IMR-90 (cell line): ENCODE measurements at regions of chr11 and their contacts with region 1.

Region 1: GRCh38 chr11:66081505-66081904 is 11.4 kb downstream of the PACS1 start:
- DNase-seq: no peak
- ATAC-seq: no peak
- H3K4me3 ChIP-seq: no peak overlapping the region
- H3K27ac ChIP-seq: no peak overlapping the region
- H3K4me1 ChIP-seq: peaks cover 26% of the 10 kb centered on the region
- H3K27me3 ChIP-seq: no peaks in the 10 kb centered on the region
- CTCF ChIP-seq: no peak
- POLR2A ChIP-seq: no peak
- RAD21 ChIP-seq: no peak

Region 2: DNA sequence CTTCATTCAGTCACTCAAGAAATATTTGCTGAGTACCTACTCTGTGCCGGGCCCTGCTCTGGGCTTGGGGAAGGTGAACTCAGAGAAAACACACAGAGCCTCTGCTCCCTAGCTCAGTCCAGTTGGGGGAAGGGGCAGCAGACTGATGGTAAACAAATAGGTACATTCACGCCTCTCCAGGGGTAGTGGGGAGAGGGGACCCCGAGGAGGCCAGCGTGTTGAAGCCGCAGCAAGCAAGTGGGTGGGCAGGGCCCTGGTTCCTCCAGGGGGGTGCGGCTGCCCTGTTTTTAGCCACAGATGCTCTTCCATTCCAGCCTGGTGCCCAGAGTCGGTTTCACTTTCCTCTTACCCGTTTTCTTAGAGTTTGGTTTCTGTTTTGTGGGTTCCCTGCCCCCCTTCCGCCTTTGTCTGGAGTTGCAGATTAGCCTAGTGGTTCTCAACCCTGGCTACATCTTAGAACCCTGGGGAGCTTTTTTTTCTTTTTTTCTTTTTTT is 153.6 kb before region 1 on chr11:
- CTCF ChIA-PET with region 1: no interaction called
- POLR2A ChIA-PET with region 1: no interaction called
- dilution Hi-C with region 1: no loop called
- in situ Hi-C with region 1: no loop called
- intact Hi-C with region 1: no loop called
- DNase-seq: no peak
- ATAC-seq: peak; percentile 33
- H3K4me3 ChIP-seq: no peak overlapping the region
- H3K27ac ChIP-seq: no peak overlapping the region
- H3K4me1 ChIP-seq: no peaks in the 10 kb centered on the region; the same call in 1 of the 2 replicates
- H3K27me3 ChIP-seq: no peaks in the 10 kb centered on the region
- CTCF ChIP-seq: no peak
- POLR2A ChIP-seq: no peak
- RAD21 ChIP-seq: no peak

Region 3: DNA sequence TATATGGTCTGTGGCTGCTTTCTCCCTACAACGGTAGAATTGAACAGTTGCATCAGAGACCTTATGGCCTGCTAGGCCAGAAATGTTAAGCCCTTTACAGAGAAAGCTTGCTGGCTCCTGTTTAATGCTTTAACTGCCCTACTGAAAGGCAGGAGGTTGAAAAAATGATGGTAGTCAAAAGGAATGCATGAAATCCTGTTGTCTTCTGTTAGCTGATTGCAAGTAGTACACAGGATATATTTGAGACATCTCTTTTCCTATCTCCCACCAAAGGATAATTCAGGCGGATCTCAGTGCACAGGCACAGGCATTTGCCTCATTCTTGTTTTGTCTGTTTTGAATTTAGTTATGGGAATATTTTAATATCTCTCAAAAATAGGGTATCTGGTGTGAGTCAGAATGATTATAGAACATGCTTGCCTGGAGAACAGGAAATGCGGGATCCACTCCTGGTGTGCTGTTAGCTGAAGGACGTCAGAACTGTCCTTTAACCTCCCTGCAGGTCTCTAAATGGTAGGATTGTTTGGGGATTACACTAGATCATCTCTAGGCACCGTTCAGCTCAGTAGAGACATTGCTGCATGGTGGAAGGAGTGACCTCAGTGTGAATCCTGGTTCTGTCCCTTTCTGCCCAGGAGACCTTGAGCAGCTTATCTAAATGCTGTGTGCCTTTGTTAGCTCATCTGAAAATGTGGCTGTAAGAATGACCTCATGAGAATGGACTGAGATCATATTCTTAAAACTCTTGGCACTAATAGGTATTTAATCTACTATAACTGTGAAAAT is 38.0 kb after region 1 on chr11:
- CTCF ChIA-PET with region 1: interaction called, 3 read pairs
- POLR2A ChIA-PET with region 1: no interaction called
- dilution Hi-C with region 1: no loop called
- in situ Hi-C with region 1: no loop called
- intact Hi-C with region 1: loop called (anchors 5 kb)
- DNase-seq: peak; percentile 94
- ATAC-seq: peak; percentile 89
- H3K4me3 ChIP-seq: no peak overlapping the region
- H3K27ac ChIP-seq: peak overlapping the region; percentile 74
- H3K4me1 ChIP-seq: peaks cover 16% of the 10 kb centered on the region
- H3K27me3 ChIP-seq: no peaks in the 10 kb centered on the region
- CTCF ChIP-seq: no peak
- POLR2A ChIP-seq: peak; percentile 77
- RAD21 ChIP-seq: 0 out of 2 replicates have a peak, but pooled peaks have one; percentile 13

Region 4: GRCh38 chr11:66207876-66208275 is 126.4 kb after region 1 on chr11:
- CTCF ChIA-PET with region 1: no interaction called
- POLR2A ChIA-PET with region 1: no interaction called
- dilution Hi-C with region 1: no loop called
- in situ Hi-C with region 1: no loop called
- intact Hi-C with region 1: loop called (anchors 10 kb)
- DNase-seq: no peak
- ATAC-seq: no peak
- H3K4me3 ChIP-seq: no peak overlapping the region
- H3K27ac ChIP-seq: no peak overlapping the region
- H3K4me1 ChIP-seq: no peaks in the 10 kb centered on the region; the same call in 1 of the 2 replicates
- H3K27me3 ChIP-seq: no peaks in the 10 kb centered on the region
- CTCF ChIP-seq: no peak
- POLR2A ChIP-seq: no peak
- RAD21 ChIP-seq: no peak